Activated CD8-positive, alpha-beta T cell treated with anti-CD3 and anti-CD28 coated beads, Interleukin-2, amount 10 ng/mL, durations not matched to agents 7 days and 5 days (primary cell): ENCODE measurements at regions of chr17 and their contacts with region 1.

Region 1: GRCh38 chr17:45235416-45236281 is 14.0 kb downstream of the FMNL1 start:
- DNase-seq: peak; percentile 86
- ATAC-seq: peak; percentile 68
- H3K4me3 Mint-ChIP-seq: no peak overlapping the region
- H3K27ac Mint-ChIP-seq: peak overlapping the region; percentile 60
- H3K4me1 Mint-ChIP-seq: peaks cover 62% of the 10 kb centered on the region
- H3K27me3 Mint-ChIP-seq: no peaks in the 10 kb centered on the region

Region 2: GRCh38 chr17:45256114-45256966 is 20.7 kb after region 1 on chr17:
- CTCF ChIA-PET with region 1: interaction called, 14 read pairs
- POLR2A ChIA-PET with region 1: no interaction called
- DNase-seq: peak; percentile 35
- ATAC-seq: peak; percentile 58
- H3K4me3 Mint-ChIP-seq: peak overlapping the region; percentile 45
- H3K27ac Mint-ChIP-seq: peak overlapping the region; percentile 78
- H3K4me1 Mint-ChIP-seq: peaks cover 65% of the 10 kb centered on the region
- H3K27me3 Mint-ChIP-seq: no peaks in the 10 kb centered on the region

Region 3: GRCh38 chr17:45261577-45262515 is 26.2 kb after region 1 on chr17 and contains the start of gene SPATA32:
- CTCF ChIA-PET with region 1: interaction called, 14 read pairs
- POLR2A ChIA-PET with region 1: no interaction called
- DNase-seq: peak; percentile 85
- ATAC-seq: peak; percentile 88
- H3K4me3 Mint-ChIP-seq: peak within 1 kb of the TSS; percentile 80
- H3K27ac Mint-ChIP-seq: peak within 1 kb of the TSS; percentile 91
- H3K4me1 Mint-ChIP-seq: peaks cover 37% of the 10 kb centered on the region
- H3K27me3 Mint-ChIP-seq: no peaks in the 10 kb centered on the region
- total RNA-seq, gene SPATA32: 0.52 to 0.55 TPM